Naive thymus-derived CD4-positive, alpha-beta T cell (primary cell): ENCODE measurements at regions of chr19 and their contacts with region 1.

Region 1: DNA sequence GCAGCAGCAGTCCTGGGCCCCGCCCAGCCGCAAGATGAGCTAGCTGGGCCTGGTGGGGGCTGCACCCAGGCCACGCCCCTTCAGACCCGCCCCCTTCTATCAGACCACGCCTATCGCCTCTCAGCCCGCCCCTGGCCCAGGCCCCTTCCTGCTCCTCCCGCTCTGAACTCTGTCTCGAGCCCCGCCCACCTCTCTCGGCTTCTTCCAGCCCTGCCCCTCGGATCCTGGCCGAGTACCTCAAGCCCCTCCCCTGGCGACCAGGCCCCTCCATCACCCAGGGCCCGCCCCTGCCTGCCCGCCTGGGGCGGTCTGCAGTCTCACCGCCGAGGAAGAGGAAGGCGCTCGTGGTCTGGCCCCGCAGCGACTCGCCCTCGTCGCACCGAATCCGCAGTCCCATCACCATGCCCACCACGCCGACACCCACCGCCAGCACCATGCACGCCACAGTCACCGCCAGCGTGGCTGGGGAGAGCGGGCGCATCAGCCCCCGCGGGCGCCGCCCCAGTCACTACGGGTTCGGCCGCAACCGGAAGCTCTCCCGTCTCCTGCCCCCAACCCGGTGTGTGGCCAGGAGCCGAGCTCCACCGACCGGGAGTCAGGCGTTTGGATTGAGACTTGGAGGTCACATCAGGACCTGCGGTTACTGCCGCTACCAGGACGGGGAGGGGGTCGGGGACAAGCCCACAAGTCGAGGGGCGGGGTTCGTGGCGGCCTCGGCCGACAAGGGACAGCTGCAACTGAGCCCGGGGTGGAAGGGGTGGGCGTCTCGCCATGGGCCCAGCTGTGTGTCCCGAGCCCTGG is 1.0 kb downstream of the CLDND2 start:
- DNase-seq: peak; percentile 84 to 100 (median 90)
- ATAC-seq: peak; percentile 93
- H3K4me3 ChIP-seq: peak overlapping the region; percentile 96
- H3K4me3 Mint-ChIP-seq: peak overlapping the region; percentile 92 to 100 (median 98)
- H3K27ac ChIP-seq: peak overlapping the region; percentile 81
- H3K27ac Mint-ChIP-seq: peak overlapping the region; percentile 79 to 98 (median 95)
- H3K4me1 ChIP-seq: peaks cover 23 to 26% of the 10 kb centered on the region in 2 donors
- H3K4me1 Mint-ChIP-seq: peaks cover 53 to 81% (median 59%) of the 10 kb centered on the region in 7 donors
- H3K27me3 ChIP-seq: no peaks in the 10 kb centered on the region
- H3K27me3 Mint-ChIP-seq: no peaks in the 10 kb centered on the region

Region 2: GRCh38 chr19:51327066-51328001 is 40.4 kb before region 1 on chr19:
- CTCF ChIA-PET with region 1: no interaction called
- POLR2A ChIA-PET with region 1: no interaction called
- intact Hi-C with region 1: loop called in 1 of 2 experiments (anchors 1 kb)
- DNase-seq: peak in 5 of 9 donors; percentile 18 to 62 (median 28)
- ATAC-seq: peak; percentile 84
- H3K4me3 ChIP-seq: no peak overlapping the region
- H3K4me3 Mint-ChIP-seq: peak overlapping the region in 9 of 10 donors; percentile 38 to 79 (median 61)
- H3K27ac ChIP-seq: no peak overlapping the region
- H3K27ac Mint-ChIP-seq: no peak overlapping the region
- H3K4me1 ChIP-seq: peaks cover 0 to 3% of the 10 kb centered on the region in 2 donors
- H3K4me1 Mint-ChIP-seq: peaks cover 0 to 10% (median 5%) of the 10 kb centered on the region in 7 donors
- H3K27me3 ChIP-seq: peaks cover 0 to 14% of the 10 kb centered on the region in 2 donors
- H3K27me3 Mint-ChIP-seq: peaks cover 43 to 74% (median 61%) of the 10 kb centered on the region in 5 donors

Region 3: GRCh38 chr19:51393959-51394836 is 26.4 kb after region 1 on chr19:
- CTCF ChIA-PET with region 1: no interaction called
- POLR2A ChIA-PET with region 1: interaction called, 3 read pairs
- intact Hi-C with region 1: loop called (anchors 1 kb)
- DNase-seq: peak; percentile 64 to 91 (median 86)
- ATAC-seq: peak; percentile 95
- H3K4me3 ChIP-seq: peak overlapping the region; percentile 46
- H3K4me3 Mint-ChIP-seq: peak overlapping the region; percentile 79 to 91 (median 86)
- H3K27ac ChIP-seq: peak overlapping the region; percentile 50
- H3K27ac Mint-ChIP-seq: peak overlapping the region; percentile 32 to 97 (median 73)
- H3K4me1 ChIP-seq: peaks cover 0 to 14% of the 10 kb centered on the region in 2 donors
- H3K4me1 Mint-ChIP-seq: peaks cover 6 to 60% (median 16%) of the 10 kb centered on the region in 7 donors
- H3K27me3 ChIP-seq: no peaks in the 10 kb centered on the region
- H3K27me3 Mint-ChIP-seq: peaks cover 0 to 4% (median 0%) of the 10 kb centered on the region in 5 donors

Region 4: DNA sequence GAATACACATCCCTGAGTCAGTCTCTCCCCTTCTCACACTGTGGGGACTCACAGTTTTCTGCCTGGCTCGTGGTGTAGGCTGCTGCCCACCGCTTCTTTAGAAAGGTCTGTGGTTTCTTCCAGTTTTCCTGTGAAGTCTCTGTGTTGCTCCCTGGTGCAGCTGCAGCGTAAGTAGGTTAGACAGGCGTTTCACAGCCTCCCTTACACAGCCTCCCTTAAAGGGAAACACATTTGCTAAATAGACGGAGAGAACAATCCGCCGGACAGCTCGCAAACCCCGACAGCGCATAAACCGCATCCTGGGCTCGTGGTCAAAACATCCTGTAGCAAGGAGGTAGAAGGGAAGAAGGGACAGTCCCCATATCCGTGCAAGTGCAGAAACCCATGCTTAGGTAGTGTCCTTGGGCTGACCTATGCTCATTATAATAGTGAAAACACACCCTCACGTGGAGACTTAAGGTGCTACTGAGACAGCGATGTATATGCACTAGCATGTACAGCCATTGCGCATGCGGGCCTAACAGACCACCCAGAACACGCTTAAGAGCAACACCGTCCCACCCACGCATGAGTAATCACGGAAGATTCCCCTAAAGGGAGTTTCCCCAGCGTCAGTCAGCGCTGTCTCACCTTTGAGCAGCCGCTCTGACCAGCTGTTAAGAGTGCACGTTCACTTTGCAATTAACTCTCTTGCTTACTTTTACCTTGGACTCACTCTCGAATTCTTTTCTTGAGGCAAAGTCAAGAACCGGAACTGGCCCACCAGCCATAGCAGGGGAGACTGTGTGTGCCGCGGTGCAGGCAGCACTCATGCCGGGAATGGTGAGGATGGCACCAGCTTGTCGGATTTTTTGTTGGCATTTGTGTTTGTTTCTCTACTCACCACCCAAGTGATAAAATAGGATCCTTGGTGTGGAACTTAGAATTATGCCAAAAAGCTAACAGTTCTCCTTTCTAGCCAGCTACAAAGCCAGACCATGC is 73.9 kb after region 1 on chr19:
- CTCF ChIA-PET with region 1: interaction called, 5 read pairs
- POLR2A ChIA-PET with region 1: interaction called, 4 read pairs
- intact Hi-C with region 1: loop called (anchors 2 kb)
- DNase-seq: peak; percentile 27 to 87 (median 68)
- ATAC-seq: peak; percentile 91
- H3K4me3 ChIP-seq: peak overlapping the region; percentile 31
- H3K4me3 Mint-ChIP-seq: peak overlapping the region; percentile 74 to 92 (median 83)
- H3K27ac ChIP-seq: peak overlapping the region; percentile 53
- H3K27ac Mint-ChIP-seq: peak overlapping the region; percentile 49 to 88 (median 77)
- H3K4me1 ChIP-seq: peaks cover 22 to 24% of the 10 kb centered on the region in 2 donors
- H3K4me1 Mint-ChIP-seq: peaks cover 22 to 43% (median 34%) of the 10 kb centered on the region in 7 donors
- H3K27me3 ChIP-seq: peaks cover 0 to 4% of the 10 kb centered on the region in 2 donors
- H3K27me3 Mint-ChIP-seq: peaks cover 0 to 59% (median 5%) of the 10 kb centered on the region in 5 donors

Region 5: GRCh38 chr19:52734893-52735661 is 1367.3 kb after region 1 on chr19 and contains the start of gene ZNF611:
- CTCF ChIA-PET with region 1: no interaction called
- POLR2A ChIA-PET with region 1: no interaction called
- intact Hi-C with region 1: no loop called
- DNase-seq: peak; percentile 97 to 100 (median 98)
- ATAC-seq: peak; percentile 98
- H3K4me3 ChIP-seq: peak within 1 kb of the TSS; percentile 99
- H3K4me3 Mint-ChIP-seq: peak within 1 kb of the TSS; percentile 85 to 96 (median 93)
- H3K27ac ChIP-seq: peak within 1 kb of the TSS; percentile 95
- H3K27ac Mint-ChIP-seq: peak within 1 kb of the TSS; percentile 92 to 98 (median 95)
- H3K4me1 ChIP-seq: peaks cover 0 to 8% of the 10 kb centered on the region in 2 donors
- H3K4me1 Mint-ChIP-seq: peaks cover 14 to 32% (median 24%) of the 10 kb centered on the region in 7 donors
- H3K27me3 ChIP-seq: no peaks in the 10 kb centered on the region
- H3K27me3 Mint-ChIP-seq: no peaks in the 10 kb centered on the region
- total RNA-seq, gene ZNF611: 23.4 to 56.0 (median 36.8) TPM